Activated T-helper 1 cell treated with anti-CD3 and anti-CD28 coated beads, Interleukin-12 subunit alpha, Interleukin-12 subunit beta, Interleukin-2, Interleukin-4 antibody, amounts not matched to agents 30 ng/mL and 10 ng/mL and 1 ng/mL, durations not matched to agents 14 hours and 24 hours and 36 hours (primary cell): ENCODE measurements at regions of chr3 and their contacts with region 1.

Region 1: DNA sequence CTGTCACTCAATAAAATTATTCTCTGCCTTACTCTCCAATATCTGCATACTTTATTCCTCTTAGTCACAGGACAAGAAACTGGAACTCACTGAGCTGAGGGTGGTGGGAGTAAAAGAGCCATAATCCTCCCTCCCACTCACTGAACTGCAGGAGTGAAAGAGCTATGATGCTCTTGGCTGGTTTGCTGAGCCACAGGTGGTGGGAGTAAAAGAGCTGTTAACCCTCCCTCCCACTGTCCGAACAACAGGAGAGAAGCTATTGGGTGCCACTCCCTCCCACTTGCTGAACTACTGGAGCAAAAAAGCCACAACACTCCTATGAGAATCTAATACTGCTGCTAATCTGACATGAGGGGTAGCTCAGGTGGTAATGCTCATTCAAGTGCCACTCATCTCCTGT is 391.0 kb downstream of the NSUN3 start:
- DNase-seq: no peak
- H3K4me3 Mint-ChIP-seq: no peak overlapping the region
- H3K27ac Mint-ChIP-seq: no peak overlapping the region
- H3K4me1 Mint-ChIP-seq: no peaks in the 10 kb centered on the region
- H3K27me3 Mint-ChIP-seq: no peaks in the 10 kb centered on the region

Region 2: GRCh38 chr3:94433811-94434210 is 20.1 kb before region 1 on chr3:
- intact Hi-C with region 1: loop called (anchors 1 kb)
- DNase-seq: no peak
- H3K4me3 Mint-ChIP-seq: no peak overlapping the region
- H3K27ac Mint-ChIP-seq: no peak overlapping the region
- H3K4me1 Mint-ChIP-seq: no peaks in the 10 kb centered on the region
- H3K27me3 Mint-ChIP-seq: no peaks in the 10 kb centered on the region

Region 3: DNA sequence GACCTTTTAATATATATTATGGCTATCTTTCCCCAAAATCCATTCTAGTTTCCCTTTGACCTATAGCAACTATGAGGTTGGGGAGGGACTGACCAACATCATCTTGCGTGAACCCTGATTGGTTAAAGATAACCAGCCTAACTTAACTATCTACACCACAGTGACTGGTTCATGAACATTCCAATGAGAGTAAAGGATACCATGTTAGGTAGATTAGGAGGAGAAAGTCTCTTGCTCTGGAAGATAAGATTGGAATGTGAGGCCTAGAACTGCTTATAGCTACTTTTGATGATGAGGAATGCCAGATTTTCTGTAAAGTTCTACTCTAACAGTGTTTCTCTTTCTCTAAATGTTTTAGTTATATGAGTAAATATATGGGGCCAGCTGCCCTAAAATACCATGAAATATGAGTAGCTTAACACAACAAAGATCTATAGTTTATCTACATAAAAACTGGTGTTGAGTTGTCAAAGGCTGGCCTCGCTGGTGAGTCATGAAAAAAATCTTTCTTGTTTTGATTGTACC is 90.3 kb after region 1 on chr3:
- intact Hi-C with region 1: no loop called
- DNase-seq: no peak
- H3K4me3 Mint-ChIP-seq: no peak overlapping the region
- H3K27ac Mint-ChIP-seq: no peak overlapping the region
- H3K4me1 Mint-ChIP-seq: no peaks in the 10 kb centered on the region
- H3K27me3 Mint-ChIP-seq: peaks cover 2% of the 10 kb centered on the region

Region 4: DNA sequence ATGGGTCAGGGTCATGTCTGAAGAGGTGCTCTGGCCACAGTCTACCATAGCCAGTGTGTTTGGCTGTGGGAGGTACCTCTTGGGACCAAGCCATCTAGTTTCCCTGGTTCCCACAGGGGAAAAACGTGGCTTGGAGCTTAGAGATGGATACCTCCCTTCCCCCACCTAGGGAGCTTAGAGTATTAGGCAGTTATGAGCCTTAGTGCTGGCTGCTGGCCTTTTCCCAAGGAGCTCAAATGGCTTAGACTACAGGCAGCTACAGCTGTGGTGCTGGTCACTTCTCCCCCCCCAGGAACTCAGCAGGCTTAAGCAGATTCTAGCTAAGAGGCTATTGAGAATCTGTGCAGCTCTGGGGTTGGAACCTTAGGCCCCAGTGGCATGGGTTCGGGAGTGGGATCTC is 200.2 kb after region 1 on chr3:
- intact Hi-C with region 1: no loop called
- DNase-seq: no peak
- H3K4me3 Mint-ChIP-seq: no peak overlapping the region
- H3K27ac Mint-ChIP-seq: no peak overlapping the region
- H3K4me1 Mint-ChIP-seq: no peaks in the 10 kb centered on the region
- H3K27me3 Mint-ChIP-seq: peaks cover 2% of the 10 kb centered on the region